ENCODE measurements at regions of chr18 and their contacts with region 1.

Region 1: DNA sequence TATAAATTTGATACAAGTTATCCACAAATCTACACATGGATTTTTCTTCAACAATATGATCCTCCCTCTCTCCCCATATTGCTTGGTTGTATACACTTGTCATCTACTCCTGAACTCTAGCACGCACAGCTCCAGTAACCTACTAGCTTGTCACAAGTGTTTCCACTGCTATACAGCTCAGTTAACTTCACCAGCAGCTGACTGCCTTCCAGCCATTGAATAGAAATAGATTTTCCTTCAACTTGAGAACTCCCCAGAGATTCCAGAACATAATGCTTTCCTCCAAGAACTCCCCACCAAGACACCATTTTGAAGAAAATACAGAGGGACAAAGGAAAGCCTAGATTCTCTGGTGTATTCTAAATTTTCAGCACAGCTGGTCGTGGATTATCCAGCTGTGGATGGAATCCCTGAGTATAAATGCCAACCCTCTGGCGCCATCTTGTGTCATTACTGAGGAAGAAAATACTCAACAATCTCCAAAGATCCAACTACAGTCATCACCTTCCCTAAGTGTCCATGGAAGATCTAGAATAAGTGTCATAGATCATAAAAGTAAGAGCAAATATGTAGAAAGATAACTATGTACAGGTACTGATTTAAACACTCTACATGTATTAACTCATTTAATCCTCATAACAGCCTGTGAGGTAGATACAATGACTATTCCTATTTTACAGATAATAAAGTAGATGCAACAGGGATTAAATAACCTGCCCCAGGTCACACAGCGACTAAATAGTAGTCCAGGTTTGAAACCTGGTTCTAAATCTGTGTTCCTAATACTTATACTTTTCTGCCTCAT is 156.7 kb downstream of the ARHGAP28 start:
- DNase-seq: peak in 1 of 3 donors; percentile 55
- ATAC-seq: peak; percentile 88 to 94 (median 90)
- H3K4me3 ChIP-seq: no peak overlapping the region
- H3K27ac ChIP-seq: no peak overlapping the region
- H3K4me1 ChIP-seq: no peaks in the 10 kb centered on the region
- H3K27me3 ChIP-seq: no peaks in the 10 kb centered on the region
- CTCF ChIP-seq: peak; percentile 64 to 74 (median 70)
- POLR2A ChIP-seq: no peak

Region 2: DNA sequence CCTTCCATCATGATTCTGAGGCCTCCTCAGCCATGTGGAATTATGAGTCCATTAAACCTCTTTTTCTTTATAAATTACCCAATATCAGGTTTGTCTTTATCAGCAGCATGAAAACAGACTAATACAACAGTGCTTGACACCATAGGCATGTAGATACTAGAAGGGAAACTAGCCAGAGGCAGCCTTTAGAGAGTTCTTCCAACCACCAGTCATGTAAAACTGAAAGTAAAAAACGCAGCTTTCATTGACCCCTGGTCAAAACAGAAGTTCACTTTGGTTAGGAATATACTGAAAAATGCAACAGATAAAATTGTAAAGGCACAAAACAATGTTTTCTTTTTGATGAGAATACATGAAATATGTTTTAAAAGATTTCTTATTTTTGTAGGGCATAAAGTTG is 348.7 kb before region 1 on chr18:
- intact Hi-C with region 1: loop called (anchors 10 kb)
- DNase-seq: no peak
- ATAC-seq: peak; percentile 65 to 76 (median 68)
- H3K4me3 ChIP-seq: no peak overlapping the region
- H3K27ac ChIP-seq: no peak overlapping the region
- H3K4me1 ChIP-seq: no peaks in the 10 kb centered on the region
- H3K27me3 ChIP-seq: no peaks in the 10 kb centered on the region
- CTCF ChIP-seq: no peak
- POLR2A ChIP-seq: no peak

Region 3: DNA sequence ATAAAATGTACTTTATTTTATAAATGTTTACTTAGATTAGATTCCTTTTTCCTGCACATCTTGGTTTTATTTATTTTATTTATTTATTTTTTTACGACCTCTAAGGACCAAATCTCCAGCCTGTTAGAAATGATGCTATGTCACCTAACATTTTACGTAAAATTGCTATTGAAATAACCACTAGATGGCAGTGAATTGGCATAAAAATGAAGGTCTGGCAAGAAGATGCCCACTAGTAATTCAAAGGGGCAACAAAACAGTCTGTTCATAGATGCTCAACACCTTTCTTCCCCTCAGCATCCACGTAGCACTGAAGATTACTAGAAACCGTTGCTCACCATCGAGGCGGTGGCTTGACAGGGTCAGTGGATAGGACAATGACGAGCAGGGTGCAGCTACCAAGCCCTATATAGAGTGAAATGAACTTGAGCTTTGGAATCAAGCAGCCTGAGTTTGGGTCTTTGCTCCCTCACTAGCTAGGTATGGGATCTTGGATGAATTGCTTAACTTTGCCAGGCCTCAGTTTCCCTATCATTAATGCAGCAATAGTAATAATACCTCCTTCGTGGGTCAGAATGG is 342.8 kb before region 1 on chr18:
- intact Hi-C with region 1: loop called (anchors 10 kb)
- DNase-seq: no peak
- ATAC-seq: peak in 3 of 4 donors; percentile 33 to 47 (median 45)
- H3K4me3 ChIP-seq: no peak overlapping the region
- H3K27ac ChIP-seq: no peak overlapping the region
- H3K4me1 ChIP-seq: no peaks in the 10 kb centered on the region
- H3K27me3 ChIP-seq: no peaks in the 10 kb centered on the region
- CTCF ChIP-seq: peak; percentile 32 to 60 (median 55)
- POLR2A ChIP-seq: no peak

Measured in right lobe of liver (tissue), 6 donors.